ENCODE measurements at regions of chr12 and their contacts with region 1.

Region 1: GRCh38 chr12:11765817-11766794 is 116.6 kb downstream of the ETV6 start:
- DNase-seq: peak in 4 of 5 donors; percentile 27 to 54 (median 38)
- ATAC-seq: peak; percentile 43 to 75 (median 65)
- H3K4me3 ChIP-seq: peak overlapping the region in 6 of 12 donors; percentile 2 to 23 (median 7)
- H3K27ac ChIP-seq: peak overlapping the region in 11 of 12 donors; percentile 64 to 90 (median 81)
- H3K4me1 ChIP-seq: peaks cover 5 to 98% (median 71%) of the 10 kb centered on the region in 12 donors
- H3K27me3 ChIP-seq: no peaks in the 10 kb centered on the region
- CTCF ChIP-seq: no peak
- POLR2A ChIP-seq: no peak

Region 2: GRCh38 chr12:11026121-11026520 is 740.0 kb before region 1 on chr12:
- intact Hi-C with region 1: no loop called
- DNase-seq: no peak
- ATAC-seq: no peak
- H3K4me3 ChIP-seq: no peak overlapping the region
- H3K27ac ChIP-seq: no peak overlapping the region
- H3K4me1 ChIP-seq: no peaks in the 10 kb centered on the region
- H3K27me3 ChIP-seq: no peaks in the 10 kb centered on the region
- CTCF ChIP-seq: peak in 1 of 12 donors; percentile 5
- POLR2A ChIP-seq: no peak

Region 3: GRCh38 chr12:11183011-11183410 is 583.1 kb before region 1 on chr12:
- intact Hi-C with region 1: no loop called
- DNase-seq: no peak
- ATAC-seq: no peak
- H3K4me3 ChIP-seq: no peak overlapping the region
- H3K27ac ChIP-seq: no peak overlapping the region
- H3K4me1 ChIP-seq: no peaks in the 10 kb centered on the region
- H3K27me3 ChIP-seq: no peaks in the 10 kb centered on the region
- CTCF ChIP-seq: no peak
- POLR2A ChIP-seq: no peak

Region 4: GRCh38 chr12:11658791-11659190 is 107.3 kb before region 1 on chr12:
- intact Hi-C with region 1: loop called in 2 of 10 experiments (anchors 5 kb)
- DNase-seq: no peak
- ATAC-seq: no peak
- H3K4me3 ChIP-seq: no peak overlapping the region
- H3K27ac ChIP-seq: peak overlapping the region in 5 of 12 donors; percentile 6 to 77 (median 7)
- H3K4me1 ChIP-seq: peaks cover 0 to 98% (median 68%) of the 10 kb centered on the region in 12 donors
- H3K27me3 ChIP-seq: no peaks in the 10 kb centered on the region
- CTCF ChIP-seq: no peak
- POLR2A ChIP-seq: no peak

Region 5: DNA sequence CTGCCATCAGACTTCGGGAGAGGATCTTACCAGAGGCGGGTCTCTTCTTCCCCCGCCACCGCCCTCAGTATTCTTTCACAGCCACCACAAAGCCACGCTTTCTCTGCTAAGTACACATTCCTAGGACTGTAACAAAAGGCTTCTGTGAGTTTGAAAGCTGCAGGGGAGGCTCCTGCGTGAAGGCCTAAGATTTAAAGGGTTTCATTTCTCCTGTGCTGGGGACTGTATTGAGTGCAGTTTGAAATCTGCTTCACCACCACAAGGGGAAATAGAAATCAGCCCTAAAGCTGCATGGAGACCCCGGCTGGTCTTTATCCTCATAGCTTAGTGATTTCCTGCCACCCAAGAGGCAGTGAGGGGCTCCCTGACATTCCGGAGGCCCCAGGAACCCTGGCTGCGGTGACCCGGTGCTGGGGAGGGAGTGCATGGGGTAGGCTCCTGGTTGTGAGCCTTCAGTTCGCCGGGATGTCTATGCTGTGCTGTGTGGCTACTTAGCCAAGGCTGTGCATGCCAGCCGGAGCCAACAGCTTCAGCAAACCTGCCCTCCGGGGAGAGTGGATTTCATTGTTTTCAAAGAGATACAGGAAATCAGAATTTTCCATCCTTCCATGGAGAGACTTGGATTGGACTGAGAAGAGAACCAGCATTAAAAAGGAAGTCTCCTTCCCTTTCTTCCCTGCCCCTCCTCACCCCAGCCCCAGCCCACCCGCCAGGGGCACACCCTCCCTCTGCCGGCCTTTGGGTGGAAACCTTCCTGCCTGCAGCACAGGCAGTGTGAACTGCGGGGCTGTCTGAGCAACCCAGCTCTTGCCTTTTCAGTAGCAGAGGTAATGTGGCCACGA is 46.7 kb after region 1 on chr12:
- intact Hi-C with region 1: loop called in 3 of 10 experiments (anchors 5 to 10 kb)
- DNase-seq: peak; percentile 47 to 80 (median 57)
- ATAC-seq: peak; percentile 62 to 82 (median 78)
- H3K4me3 ChIP-seq: peak overlapping the region in 10 of 12 donors; percentile 12 to 47 (median 31)
- H3K27ac ChIP-seq: peak overlapping the region; percentile 66 to 89 (median 76)
- H3K4me1 ChIP-seq: peaks cover 4 to 74% (median 51%) of the 10 kb centered on the region in 12 donors
- H3K27me3 ChIP-seq: no peaks in the 10 kb centered on the region
- CTCF ChIP-seq: peak in 7 of 12 donors; percentile 4 to 36 (median 14)
- POLR2A ChIP-seq: no peak

Region 6: GRCh38 chr12:11862798-11863197 is 96.7 kb after region 1 on chr12:
- intact Hi-C with region 1: loop called in 1 of 10 experiments (anchors 10 kb)
- DNase-seq: peak in 1 of 5 donors; percentile 38
- ATAC-seq: peak; percentile 51 to 79 (median 68)
- H3K4me3 ChIP-seq: peak overlapping the region in 1 of 12 donors; percentile 3
- H3K27ac ChIP-seq: peak overlapping the region; percentile 70 to 90 (median 84)
- H3K4me1 ChIP-seq: peaks cover 8 to 55% (median 47%) of the 10 kb centered on the region in 12 donors
- H3K27me3 ChIP-seq: no peaks in the 10 kb centered on the region
- CTCF ChIP-seq: no peak
- POLR2A ChIP-seq: no peak

Region 7: DNA sequence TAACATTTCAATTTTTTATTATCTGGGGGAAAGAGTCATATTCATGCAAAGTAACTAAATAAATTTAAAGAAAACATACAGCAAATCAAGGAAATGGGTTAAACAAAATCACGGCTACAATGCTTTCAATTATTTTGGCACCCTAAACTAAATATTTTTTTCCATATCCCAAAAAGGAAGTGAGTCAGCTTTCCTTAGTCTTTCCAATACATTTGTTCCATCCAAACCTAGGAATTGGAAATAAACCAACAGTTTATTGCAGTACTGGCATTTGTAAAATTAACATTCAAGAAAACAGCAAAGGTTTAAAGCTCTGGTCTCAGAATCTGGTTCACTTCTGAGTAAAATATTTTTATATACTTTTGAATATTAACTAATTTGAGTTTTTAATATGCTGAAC is 393.9 kb after region 1 on chr12:
- intact Hi-C with region 1: no loop called
- DNase-seq: no peak
- ATAC-seq: no peak
- H3K4me3 ChIP-seq: no peak overlapping the region
- H3K27ac ChIP-seq: peak overlapping the region in 3 of 12 donors; percentile 8 to 23 (median 22)
- H3K4me1 ChIP-seq: peaks cover 0 to 21% (median 9%) of the 10 kb centered on the region in 12 donors
- H3K27me3 ChIP-seq: no peaks in the 10 kb centered on the region
- CTCF ChIP-seq: no peak
- POLR2A ChIP-seq: no peak